Gastrocnemius medialis (tissue), 4 donors: ENCODE measurements at regions of chr6 and their contacts with region 1.

Region 1: GRCh38 chr6:35640017-35640664 is 48.6 kb downstream of the FKBP5 start:
- DNase-seq: no peak
- ATAC-seq: no peak
- H3K4me3 ChIP-seq: no peak overlapping the region
- H3K27ac ChIP-seq: peak overlapping the region; percentile 45 to 67 (median 58)
- H3K4me1 ChIP-seq: peaks cover 67 to 68% of the 10 kb centered on the region in 2 donors
- H3K27me3 ChIP-seq: no peaks in the 10 kb centered on the region
- CTCF ChIP-seq: no peak
- POLR2A ChIP-seq: no peak

Region 2: DNA sequence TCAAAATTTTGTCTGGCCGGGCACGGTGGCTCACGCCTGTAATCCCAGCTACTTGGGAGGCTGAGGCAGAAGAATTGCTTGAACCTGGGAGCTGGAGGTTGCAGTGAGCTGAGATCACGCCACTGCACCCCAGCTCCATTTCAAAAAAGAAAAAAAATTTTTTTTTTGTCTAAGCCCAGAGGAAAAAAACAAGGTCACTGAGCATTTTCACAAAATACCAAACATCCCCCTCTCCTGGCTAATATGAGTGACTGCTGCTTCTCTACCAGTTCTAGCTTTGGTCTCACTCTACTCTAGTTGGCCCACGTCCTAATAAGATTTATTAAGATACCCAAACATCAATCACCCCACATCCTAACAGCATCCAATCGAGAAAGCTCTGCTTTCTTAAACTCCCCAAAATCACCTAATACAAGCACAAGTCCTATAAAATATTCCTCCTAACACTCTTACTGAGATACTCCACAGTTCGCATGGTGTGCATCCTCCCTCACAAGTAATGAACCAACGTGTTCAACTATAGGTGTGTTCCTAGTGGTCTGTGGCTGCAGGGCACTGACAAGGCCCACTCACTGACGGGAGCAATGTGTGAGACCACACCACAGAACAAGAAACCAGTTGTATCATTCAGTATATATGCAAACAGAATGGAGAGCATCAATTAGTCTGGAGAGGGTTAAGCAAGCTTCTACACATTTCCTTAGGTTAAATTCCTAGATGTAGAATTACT is 15.6 kb before region 1 on chr6:
- in situ Hi-C with region 1: no loop called
- intact Hi-C with region 1: no loop called
- DNase-seq: no peak
- ATAC-seq: no peak
- H3K4me3 ChIP-seq: no peak overlapping the region
- H3K27ac ChIP-seq: peak overlapping the region; percentile 51 to 99 (median 55)
- H3K4me1 ChIP-seq: peaks cover 17 to 28% of the 10 kb centered on the region in 2 donors
- H3K27me3 ChIP-seq: no peaks in the 10 kb centered on the region
- CTCF ChIP-seq: peak in 1 of 5 experiments; percentile 15
- POLR2A ChIP-seq: no peak

Region 3: DNA sequence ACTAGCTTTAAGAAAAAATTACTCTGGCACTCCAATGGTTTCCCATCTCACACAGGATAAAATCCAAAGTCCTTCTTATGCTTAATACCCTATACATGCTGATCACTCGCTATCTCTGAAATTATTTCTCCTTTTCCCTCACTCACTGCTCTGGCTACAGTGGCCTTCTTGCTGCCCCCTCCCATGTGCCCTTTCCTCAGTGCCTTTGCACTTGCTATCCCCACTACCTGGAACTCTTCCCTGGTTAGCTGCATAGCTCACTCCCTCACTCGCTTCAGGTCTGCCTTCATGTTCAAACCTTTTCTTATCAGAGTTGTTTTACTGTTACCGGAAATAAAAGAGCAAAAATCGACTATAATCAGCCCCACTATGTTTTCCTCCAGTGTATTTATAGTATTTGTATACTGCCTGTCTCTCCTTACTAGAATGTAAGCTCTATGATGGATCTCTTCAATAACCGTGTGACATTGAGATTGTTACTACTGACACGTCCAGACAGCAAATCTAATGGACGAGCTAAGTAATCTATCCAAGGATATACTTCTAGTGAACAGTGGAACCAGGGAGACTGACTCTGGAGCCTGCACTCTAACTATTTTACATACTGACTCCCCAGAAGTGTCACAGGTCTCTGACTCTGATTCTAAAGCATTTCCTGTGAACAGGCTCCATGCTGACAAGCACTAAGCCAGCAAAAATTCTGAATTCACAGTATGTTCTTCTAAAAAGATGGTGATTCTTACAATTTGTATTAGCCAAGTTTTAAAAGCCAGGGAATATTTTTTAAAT is 23.5 kb after region 1 on chr6:
- in situ Hi-C with region 1: no loop called
- intact Hi-C with region 1: loop called (anchors 2 kb)
- DNase-seq: no peak
- ATAC-seq: peak in 1 of 2 donors; percentile 18
- H3K4me3 ChIP-seq: peak overlapping the region in 1 of 4 donors; percentile 1
- H3K27ac ChIP-seq: peak overlapping the region; percentile 55 to 83 (median 72)
- H3K4me1 ChIP-seq: peaks cover 63 to 66% of the 10 kb centered on the region in 2 donors
- H3K27me3 ChIP-seq: no peaks in the 10 kb centered on the region
- CTCF ChIP-seq: no peak
- POLR2A ChIP-seq: no peak

Region 4: DNA sequence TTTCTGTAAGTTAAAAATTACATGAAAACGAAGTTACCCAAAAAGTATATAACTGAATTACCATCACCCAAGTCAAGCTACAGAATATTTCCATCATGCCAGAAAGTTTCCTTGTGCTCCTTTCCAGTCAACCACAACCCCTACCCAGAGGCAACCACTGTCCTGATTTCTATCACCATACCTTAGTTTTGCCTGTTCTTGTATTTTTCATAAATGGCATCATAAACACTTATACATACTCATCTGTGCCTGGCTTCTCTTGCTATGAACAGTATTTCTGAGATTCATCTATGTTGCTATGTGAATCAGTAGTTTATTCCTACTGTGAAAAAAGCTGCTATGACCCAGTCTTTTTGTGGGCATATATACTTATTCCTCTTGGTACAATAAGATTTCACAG is 41.2 kb after region 1 on chr6:
- in situ Hi-C with region 1: loop called in 1 of 4 experiments (anchors 5 kb)
- intact Hi-C with region 1: loop called (anchors 5 kb)
- DNase-seq: no peak
- ATAC-seq: no peak
- H3K4me3 ChIP-seq: peak overlapping the region; percentile 35 to 85 (median 62)
- H3K27ac ChIP-seq: peak overlapping the region; percentile 96 to 98 (median 97)
- H3K4me1 ChIP-seq: peaks cover 68 to 78% of the 10 kb centered on the region in 2 donors
- H3K27me3 ChIP-seq: no peaks in the 10 kb centered on the region
- CTCF ChIP-seq: no peak
- POLR2A ChIP-seq: no peak